Activated CD4-positive, alpha-beta T cell treated with anti-CD3 and anti-CD28 coated beads, Interleukin-2, amount 10 ng/mL, durations not matched to agents 24 days and 14 days (primary cell): ENCODE measurements at regions of chr10 and their contacts with region 1.

Region 1: DNA sequence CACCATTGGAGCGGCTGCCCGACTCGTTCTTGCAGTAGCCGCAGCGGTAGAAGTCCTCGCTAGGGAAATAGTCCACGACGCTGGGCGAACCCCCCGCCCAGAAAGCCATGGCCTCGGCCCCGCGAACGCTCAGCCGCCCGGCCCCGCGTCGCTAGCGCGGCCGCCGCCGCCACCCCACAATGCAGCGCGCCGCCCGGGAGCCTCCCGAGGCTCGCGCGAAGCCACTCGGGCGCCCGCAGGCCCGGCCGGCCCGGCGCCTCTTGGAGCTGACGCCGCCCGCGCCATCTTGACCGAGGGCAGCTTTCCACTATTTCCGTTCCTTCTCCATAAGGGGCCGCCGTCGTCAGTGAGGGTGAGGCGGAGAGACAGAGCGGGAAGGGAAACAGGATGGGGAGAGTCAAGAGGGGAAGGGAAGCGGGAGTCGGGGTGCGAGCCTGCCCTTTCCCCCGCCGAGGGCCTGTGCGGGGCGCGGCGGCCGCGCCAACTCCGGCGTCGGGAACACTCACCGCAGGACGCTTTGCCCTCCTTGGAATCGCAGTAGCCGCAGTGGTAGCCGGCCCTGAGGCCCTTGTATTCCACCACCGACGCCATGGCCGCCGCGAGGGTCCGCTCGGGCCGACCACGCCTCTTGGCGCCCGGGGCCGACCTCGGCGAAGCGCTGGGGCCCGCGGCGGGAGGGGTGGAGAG is at the start of gene ATE1:
- DNase-seq: peak; percentile 95
- H3K4me3 Mint-ChIP-seq: peak within 1 kb of the TSS; percentile 93
- H3K27ac Mint-ChIP-seq: peak within 1 kb of the TSS; percentile 95
- H3K4me1 Mint-ChIP-seq: peaks cover 18% of the 10 kb centered on the region
- H3K27me3 Mint-ChIP-seq: no peaks in the 10 kb centered on the region
- total RNA-seq, gene ATE1: 39.0 and 39.1 TPM in 2 replicates

Region 2: GRCh38 chr10:120850911-120851865 is 1076.8 kb before region 1 on chr10 and contains the start of gene WDR11:
- intact Hi-C with region 1: loop called (anchors 5 kb)
- DNase-seq: peak; percentile 91
- H3K4me3 Mint-ChIP-seq: peak within 1 kb of the TSS; percentile 99
- H3K27ac Mint-ChIP-seq: peak within 1 kb of the TSS; percentile 95
- H3K4me1 Mint-ChIP-seq: peaks cover 29% of the 10 kb centered on the region
- H3K27me3 Mint-ChIP-seq: no peaks in the 10 kb centered on the region
- total RNA-seq, gene WDR11: 48.2 and 50.3 TPM in 2 replicates

Region 3: GRCh38 chr10:121974535-121975294 is 46.7 kb after region 1 on chr10 and contains the start of gene NSMCE4A:
- intact Hi-C with region 1: loop called (anchors 1 kb)
- DNase-seq: peak; percentile 94
- H3K4me3 Mint-ChIP-seq: peak within 1 kb of the TSS; percentile 90
- H3K27ac Mint-ChIP-seq: peak within 1 kb of the TSS; percentile 53
- H3K4me1 Mint-ChIP-seq: peaks cover 18% of the 10 kb centered on the region
- H3K27me3 Mint-ChIP-seq: no peaks in the 10 kb centered on the region
- total RNA-seq, gene NSMCE4A: 78.7 and 88.9 TPM in 2 replicates